Activated T-helper 1 cell treated with anti-CD3 and anti-CD28 coated beads, Interleukin-12 subunit alpha, Interleukin-12 subunit beta, Interleukin-2, Interleukin-4 antibody, amounts not matched to agents 30 ng/mL and 10 ng/mL and 1 ng/mL, durations not matched to agents 14 hours and 24 hours and 36 hours (primary cell): ENCODE measurements at regions of chr6 and their contacts with region 1.

Region 1: DNA sequence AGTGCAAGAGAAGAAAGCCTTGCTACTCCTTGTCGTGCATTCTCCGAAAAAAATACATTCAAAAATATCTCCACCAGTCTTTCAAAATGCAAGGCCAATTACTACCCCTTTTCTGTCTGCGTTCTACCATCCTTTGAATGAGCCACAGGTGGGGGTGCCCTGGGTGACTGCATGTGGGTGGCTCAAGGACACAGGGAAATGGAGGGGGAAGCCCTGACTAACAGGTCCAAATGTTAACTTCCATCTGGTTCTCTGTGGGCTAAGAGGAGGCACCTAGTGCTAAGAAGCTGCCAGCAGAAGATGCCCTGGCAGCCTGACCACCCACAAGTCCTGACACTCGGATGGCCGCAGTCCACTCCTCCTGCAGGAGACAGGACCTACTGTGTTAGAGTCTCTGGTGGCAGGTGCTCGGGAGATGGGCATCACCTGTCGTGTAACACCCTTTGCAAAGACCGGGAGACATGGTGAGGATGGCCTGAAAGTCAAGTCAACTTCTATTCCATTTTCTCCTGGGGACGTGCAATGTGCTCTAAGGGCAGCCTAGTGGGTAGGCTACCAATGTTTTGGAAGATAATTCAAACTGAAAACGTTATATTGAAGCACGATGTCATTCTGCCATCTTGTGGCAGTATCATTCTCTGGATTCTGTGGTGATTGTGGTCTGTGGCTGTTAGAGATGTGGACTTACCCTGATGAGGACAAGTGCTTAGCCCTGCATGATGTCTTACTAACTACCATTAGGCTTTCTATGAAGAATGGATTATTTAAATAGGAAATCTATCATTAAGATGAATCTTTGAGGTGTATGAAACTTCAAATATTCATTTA is 27.4 kb upstream of the IGF2R start:
- DNase-seq: peak; percentile 26
- H3K4me3 Mint-ChIP-seq: no peak overlapping the region
- H3K27ac Mint-ChIP-seq: no peak overlapping the region
- H3K4me1 Mint-ChIP-seq: peaks cover 10% of the 10 kb centered on the region
- H3K27me3 Mint-ChIP-seq: peaks cover 23% of the 10 kb centered on the region

Region 2: DNA sequence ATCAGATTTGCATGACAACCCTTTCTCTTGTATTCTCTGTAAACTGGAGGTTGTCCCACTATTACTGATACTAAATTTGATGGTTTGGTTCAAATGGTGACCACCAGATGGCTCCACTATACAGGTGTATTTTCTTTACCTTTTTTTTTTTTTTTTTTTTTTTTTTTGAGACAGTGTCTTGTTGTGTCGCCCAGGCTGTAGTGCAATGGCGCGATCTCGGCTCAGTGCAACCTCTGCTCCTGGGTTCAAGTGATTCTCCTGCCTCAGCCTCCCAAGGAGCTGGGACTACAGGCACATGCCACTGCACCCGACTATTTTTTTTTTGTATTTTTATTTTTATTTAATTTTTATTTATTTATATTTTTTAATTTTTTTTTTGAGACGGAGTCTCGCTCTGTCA is 220.8 kb before region 1 on chr6:
- intact Hi-C with region 1: loop called (anchors 1 kb)
- DNase-seq: peak; percentile 16
- H3K4me3 Mint-ChIP-seq: no peak overlapping the region
- H3K27ac Mint-ChIP-seq: no peak overlapping the region
- H3K4me1 Mint-ChIP-seq: peaks cover 14% of the 10 kb centered on the region
- H3K27me3 Mint-ChIP-seq: no peaks in the 10 kb centered on the region

Region 3: GRCh38 chr6:159959165-159959975 is 17.9 kb after region 1 on chr6:
- intact Hi-C with region 1: loop called (anchors 2 kb)
- DNase-seq: no peak
- H3K4me3 Mint-ChIP-seq: no peak overlapping the region
- H3K27ac Mint-ChIP-seq: no peak overlapping the region
- H3K4me1 Mint-ChIP-seq: peaks cover 13% of the 10 kb centered on the region
- H3K27me3 Mint-ChIP-seq: peaks cover 18% of the 10 kb centered on the region

Region 4: DNA sequence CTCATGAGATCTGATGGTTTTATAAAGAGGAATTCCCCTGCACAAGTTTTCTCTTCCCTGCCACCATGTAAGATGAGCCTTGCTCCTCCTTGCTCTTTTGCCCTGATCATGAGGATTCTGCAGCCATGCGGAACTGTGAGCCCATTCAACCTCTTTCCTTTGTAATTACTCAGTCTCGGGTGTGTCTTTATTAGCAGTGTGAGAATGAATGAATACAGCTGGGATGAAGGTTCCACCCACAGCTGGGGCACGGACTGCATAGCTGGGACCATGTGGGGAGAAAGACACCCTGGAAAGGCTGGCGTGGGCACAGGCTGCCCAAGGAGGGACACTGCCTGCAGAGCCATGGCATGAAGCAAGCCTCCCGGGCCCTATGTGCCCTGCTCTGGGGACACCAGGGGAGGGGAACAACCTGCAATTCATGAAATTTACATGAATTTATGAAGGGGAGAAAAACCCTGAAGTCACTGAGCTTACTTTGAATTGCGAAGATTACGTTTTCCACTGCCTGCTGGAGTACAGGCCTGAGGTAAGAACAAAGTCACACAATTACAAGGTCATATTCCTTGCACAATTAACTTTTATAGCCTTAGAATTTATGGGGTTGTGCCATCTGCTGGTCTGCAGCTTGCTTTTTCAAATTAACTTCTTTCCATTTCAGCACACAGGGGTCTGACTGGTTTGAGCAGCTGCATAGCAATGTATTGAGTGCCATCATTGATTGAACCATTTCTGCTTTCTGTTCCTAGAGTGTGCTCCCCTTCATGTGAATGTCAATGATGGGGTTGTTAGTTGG is 226.3 kb after region 1 on chr6:
- intact Hi-C with region 1: no loop called
- DNase-seq: no peak
- H3K4me3 Mint-ChIP-seq: no peak overlapping the region
- H3K27ac Mint-ChIP-seq: no peak overlapping the region
- H3K4me1 Mint-ChIP-seq: no peaks in the 10 kb centered on the region
- H3K27me3 Mint-ChIP-seq: peaks cover 7% of the 10 kb centered on the region